Uterus (tissue), 4 donors: ENCODE measurements at regions of chr18 and their contacts with region 1.

Region 1: GRCh38 chr18:12391618-12392165 is 14.7 kb upstream of the AFG3L2 start:
- DNase-seq: peak; percentile 60 to 64
- H3K4me3 ChIP-seq: no peak overlapping the region
- H3K27ac ChIP-seq: no peak overlapping the region
- H3K4me1 ChIP-seq: no peaks in the 10 kb centered on the region
- H3K27me3 ChIP-seq: no peaks in the 10 kb centered on the region
- CTCF ChIP-seq: peak; percentile 84 to 90 (median 88)
- POLR2A ChIP-seq: no peak

Region 2: GRCh38 chr18:12657684-12658425 is 266.2 kb after region 1 on chr18 and contains the start of gene SPIRE1:
- intact Hi-C with region 1: loop called (anchors 5 kb)
- DNase-seq: peak; percentile 55
- H3K4me3 ChIP-seq: peak within 1 kb of the TSS; percentile 47 to 87
- H3K27ac ChIP-seq: peak within 1 kb of the TSS; percentile 86 to 98
- H3K4me1 ChIP-seq: no peaks in the 10 kb centered on the region
- H3K27me3 ChIP-seq: no peaks in the 10 kb centered on the region
- CTCF ChIP-seq: no peak
- POLR2A ChIP-seq: peak in 1 of 2 donors; percentile 72
- total RNA-seq, gene SPIRE1: 12.9 to 78.1 (median 27.5) TPM

Region 3: DNA sequence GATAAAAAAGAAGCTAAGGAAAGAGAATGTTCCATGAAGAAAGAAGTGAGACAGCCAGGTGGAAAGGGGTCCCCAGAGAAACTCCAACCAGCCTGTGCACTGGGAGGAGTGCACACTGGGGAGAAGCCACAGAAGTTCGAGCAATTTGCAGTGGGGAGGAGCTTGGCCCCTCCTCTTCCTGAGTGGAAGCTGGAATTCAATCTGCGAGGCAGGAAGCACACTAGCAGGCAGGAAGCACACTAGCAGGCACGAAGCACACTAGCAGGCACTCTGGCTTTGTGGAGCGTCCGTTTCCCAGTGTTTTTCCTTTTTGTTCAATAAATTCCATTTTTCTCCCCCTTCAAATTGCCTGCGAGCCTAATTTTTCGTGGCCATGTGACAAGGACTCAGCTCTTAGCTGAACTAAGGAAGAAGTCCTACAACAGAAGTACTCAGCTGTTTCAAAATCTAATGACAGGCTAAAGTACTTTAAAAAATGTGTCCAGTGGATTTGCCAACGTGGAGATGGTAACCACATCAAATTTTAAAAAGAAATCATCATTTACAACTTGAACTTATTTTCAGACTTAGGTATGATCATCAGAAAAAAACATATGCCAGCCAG is 287.6 kb after region 1 on chr18:
- intact Hi-C with region 1: no loop called
- DNase-seq: peak; percentile 44 to 56
- H3K4me3 ChIP-seq: no peak overlapping the region
- H3K27ac ChIP-seq: peak overlapping the region; percentile 42 to 77
- H3K4me1 ChIP-seq: no peaks in the 10 kb centered on the region
- H3K27me3 ChIP-seq: no peaks in the 10 kb centered on the region
- CTCF ChIP-seq: no peak
- POLR2A ChIP-seq: peak in 1 of 2 donors; percentile 57